B cell (primary cell): ENCODE measurements at regions of chr10 and their contacts with region 1.

Region 1: GRCh38 chr10:511101-511848 is 178.2 kb downstream of the DIP2C start:
- DNase-seq: peak; percentile 79
- ATAC-seq: peak; percentile 81
- H3K4me3 ChIP-seq: no peak overlapping the region
- H3K4me3 Mint-ChIP-seq: peak overlapping the region; percentile 48
- H3K27ac ChIP-seq: no peak overlapping the region
- H3K27ac Mint-ChIP-seq: no peak overlapping the region
- H3K4me1 ChIP-seq: peaks cover 11 to 19% of the 10 kb centered on the region in 2 donors
- H3K4me1 Mint-ChIP-seq: peaks cover 14% of the 10 kb centered on the region
- H3K27me3 ChIP-seq: peaks cover 0 to 19% (median 3%) of the 10 kb centered on the region in 4 experiments
- H3K27me3 Mint-ChIP-seq: peaks cover 20% of the 10 kb centered on the region
- CTCF ChIP-seq: peak; percentile 89

Region 2: DNA sequence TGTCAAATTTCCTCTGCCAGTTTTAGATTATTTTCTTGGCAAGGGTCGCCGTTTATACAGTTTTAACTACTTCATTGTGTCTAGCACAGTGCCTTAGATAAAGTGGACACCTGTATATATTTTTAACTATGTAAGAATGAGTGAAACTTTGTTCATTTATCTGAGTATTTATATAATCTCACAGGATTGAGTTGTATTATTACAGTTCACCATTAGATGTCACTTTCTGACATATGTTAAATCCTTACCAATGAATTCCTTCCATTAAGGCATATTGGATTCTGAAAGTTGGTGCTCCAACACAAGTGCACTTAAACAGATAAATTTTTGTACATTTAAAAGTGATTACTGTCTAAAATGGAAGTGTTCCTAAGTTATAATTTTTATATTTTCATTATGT is 333.1 kb before region 1 on chr10:
- CTCF ChIA-PET with region 1: no interaction called
- POLR2A ChIA-PET with region 1: no interaction called
- intact Hi-C with region 1: loop called (anchors 1 kb)
- DNase-seq: peak; percentile 26
- ATAC-seq: no peak
- H3K4me3 ChIP-seq: no peak overlapping the region
- H3K4me3 Mint-ChIP-seq: no peak overlapping the region
- H3K27ac ChIP-seq: no peak overlapping the region
- H3K27ac Mint-ChIP-seq: no peak overlapping the region
- H3K4me1 ChIP-seq: no peaks in the 10 kb centered on the region
- H3K4me1 Mint-ChIP-seq: peaks cover 7% of the 10 kb centered on the region
- H3K27me3 ChIP-seq: no peaks in the 10 kb centered on the region
- H3K27me3 Mint-ChIP-seq: no peaks in the 10 kb centered on the region
- CTCF ChIP-seq: peak; percentile 62

Region 3: GRCh38 chr10:458421-458851 is 52.8 kb before region 1 on chr10:
- CTCF ChIA-PET with region 1: no interaction called
- POLR2A ChIA-PET with region 1: no interaction called
- intact Hi-C with region 1: no loop called
- DNase-seq: no peak
- ATAC-seq: no peak
- H3K4me3 ChIP-seq: no peak overlapping the region
- H3K4me3 Mint-ChIP-seq: no peak overlapping the region
- H3K27ac ChIP-seq: no peak overlapping the region
- H3K27ac Mint-ChIP-seq: no peak overlapping the region
- H3K4me1 ChIP-seq: no peaks in the 10 kb centered on the region
- H3K4me1 Mint-ChIP-seq: no peaks in the 10 kb centered on the region
- H3K27me3 ChIP-seq: no peaks in the 10 kb centered on the region
- H3K27me3 Mint-ChIP-seq: peaks cover 35% of the 10 kb centered on the region
- CTCF ChIP-seq: no peak

Region 4: GRCh38 chr10:725786-726185 is 214.5 kb after region 1 on chr10:
- CTCF ChIA-PET with region 1: no interaction called
- POLR2A ChIA-PET with region 1: no interaction called
- intact Hi-C with region 1: no loop called
- DNase-seq: no peak
- ATAC-seq: no peak
- H3K4me3 ChIP-seq: no peak overlapping the region
- H3K4me3 Mint-ChIP-seq: no peak overlapping the region
- H3K27ac ChIP-seq: no peak overlapping the region
- H3K27ac Mint-ChIP-seq: no peak overlapping the region
- H3K4me1 ChIP-seq: no peaks in the 10 kb centered on the region
- H3K4me1 Mint-ChIP-seq: no peaks in the 10 kb centered on the region
- H3K27me3 ChIP-seq: no peaks in the 10 kb centered on the region
- H3K27me3 Mint-ChIP-seq: peaks cover 2% of the 10 kb centered on the region
- CTCF ChIP-seq: no peak

Region 5: DNA sequence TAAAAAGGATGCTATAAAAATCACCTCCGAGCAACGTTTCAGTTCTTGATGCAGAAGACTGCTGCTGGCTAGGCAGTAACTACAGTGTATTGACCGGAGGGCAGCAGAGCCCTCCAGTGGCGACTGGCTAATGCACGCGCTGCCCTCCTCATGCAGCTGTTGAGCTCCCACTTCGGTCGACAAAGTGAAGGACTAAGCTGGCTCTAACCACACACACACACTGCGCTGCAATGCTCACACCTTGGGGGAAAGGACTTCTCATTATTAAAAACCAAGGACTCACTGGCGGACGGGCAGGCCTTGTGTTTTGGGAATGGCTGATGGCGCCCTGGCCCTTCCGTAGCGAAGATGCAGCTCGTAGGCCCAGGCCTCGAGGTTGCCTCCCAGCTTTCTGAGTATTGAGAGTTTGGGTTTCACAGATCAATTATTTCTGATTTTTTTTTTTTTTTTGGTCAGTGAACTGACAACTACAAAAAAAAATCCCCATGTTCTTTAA is 299.1 kb after region 1 on chr10:
- CTCF ChIA-PET with region 1: interaction called, 3 read pairs
- POLR2A ChIA-PET with region 1: no interaction called
- intact Hi-C with region 1: loop called (anchors 5 kb)
- DNase-seq: no peak
- ATAC-seq: no peak
- H3K4me3 ChIP-seq: no peak overlapping the region
- H3K4me3 Mint-ChIP-seq: no peak overlapping the region
- H3K27ac ChIP-seq: no peak overlapping the region
- H3K27ac Mint-ChIP-seq: no peak overlapping the region
- H3K4me1 ChIP-seq: no peaks in the 10 kb centered on the region
- H3K4me1 Mint-ChIP-seq: peaks cover 1% of the 10 kb centered on the region
- H3K27me3 ChIP-seq: no peaks in the 10 kb centered on the region
- H3K27me3 Mint-ChIP-seq: no peaks in the 10 kb centered on the region
- CTCF ChIP-seq: no peak